ENCODE measurements at regions of chr12 and their contacts with region 1.

Region 1: DNA sequence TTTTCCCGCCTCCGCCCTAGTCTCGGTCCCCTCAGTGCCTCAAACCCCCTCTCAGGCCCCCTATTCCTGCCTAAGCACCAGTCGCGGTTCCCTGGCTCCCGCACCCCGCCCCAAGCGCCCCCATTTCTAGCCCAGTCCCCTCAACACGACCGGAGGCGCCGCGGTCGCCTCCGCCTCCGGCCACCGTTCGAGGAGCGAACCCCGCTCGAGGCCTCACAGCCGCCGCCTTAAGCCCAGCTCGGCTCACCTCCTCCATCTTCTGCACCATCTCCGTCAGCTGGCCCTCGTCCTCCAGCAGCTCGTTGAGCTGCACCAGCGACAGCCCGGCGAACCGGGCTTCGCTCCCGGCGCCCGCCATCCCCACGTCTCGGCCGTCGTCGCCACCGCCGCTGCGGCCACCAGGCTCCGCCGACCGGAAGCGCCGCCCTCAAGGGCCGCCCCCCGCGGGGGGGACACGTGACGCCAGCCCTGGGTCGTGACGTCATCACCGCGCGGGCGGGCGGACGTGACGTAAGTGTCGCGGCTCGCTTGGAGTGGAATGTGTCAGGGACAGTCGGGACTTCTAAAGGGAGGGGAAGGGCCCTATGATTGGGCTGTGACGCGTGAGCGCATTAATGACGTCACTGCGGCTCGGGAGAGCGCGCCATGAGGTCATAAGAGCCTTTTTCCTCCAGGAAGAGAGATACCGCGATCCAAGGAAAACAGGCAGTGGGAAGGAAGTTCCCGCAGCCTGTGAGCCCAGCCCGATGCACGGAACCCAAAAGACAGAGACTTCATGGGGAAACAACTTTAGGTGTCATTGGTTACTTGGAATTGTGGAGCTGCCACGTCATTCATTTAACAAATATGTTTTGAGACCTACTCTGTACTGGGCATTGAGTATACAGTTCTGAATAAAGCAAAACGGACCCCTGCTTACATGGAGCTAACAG is at the start of gene VPS37B:
- DNase-seq: peak; percentile 65 to 94
- H3K4me3 ChIP-seq: peak within 1 kb of the TSS; percentile 89 to 98
- H3K27ac ChIP-seq: peak within 1 kb of the TSS; percentile 84 to 94
- H3K4me1 ChIP-seq: peaks cover 0 to 28% of the 10 kb centered on the region in 2 donors
- H3K27me3 ChIP-seq: no peaks in the 10 kb centered on the region
- CTCF ChIP-seq: peak in 1 of 3 experiments; percentile 44
- total RNA-seq, gene VPS37B: 31.8 TPM

Region 2: GRCh38 chr12:122851820-122852219 is 44.2 kb before region 1 on chr12:
- intact Hi-C with region 1: loop called (anchors 5 kb)
- DNase-seq: peak; percentile 39 to 91
- H3K4me3 ChIP-seq: peak overlapping the region in 1 of 2 donors; percentile 22
- H3K27ac ChIP-seq: peak overlapping the region; percentile 86 to 92
- H3K4me1 ChIP-seq: peaks cover 25 to 42% of the 10 kb centered on the region in 2 donors
- H3K27me3 ChIP-seq: no peaks in the 10 kb centered on the region
- CTCF ChIP-seq: no peak

Region 3: GRCh38 chr12:122946690-122947341 is 50.8 kb after region 1 on chr12:
- intact Hi-C with region 1: loop called (anchors 2 kb)
- DNase-seq: peak; percentile 94 to 96
- H3K4me3 ChIP-seq: no peak overlapping the region
- H3K27ac ChIP-seq: peak overlapping the region; percentile 75 to 82
- H3K4me1 ChIP-seq: peaks cover 0 to 13% of the 10 kb centered on the region in 2 donors
- H3K27me3 ChIP-seq: no peaks in the 10 kb centered on the region
- CTCF ChIP-seq: peak in 2 of 3 experiments; percentile 32 to 42

Region 4: GRCh38 chr12:122965851-122966722 is 70.1 kb after region 1 on chr12 and contains the start of gene ABCB9:
- intact Hi-C with region 1: loop called (anchors 5 kb)
- DNase-seq: peak; percentile 54 to 95
- H3K4me3 ChIP-seq: peak within 1 kb of the TSS; percentile 62 to 73
- H3K27ac ChIP-seq: peak within 1 kb of the TSS; percentile 14 to 52
- H3K4me1 ChIP-seq: peaks cover 4 to 26% of the 10 kb centered on the region in 2 donors
- H3K27me3 ChIP-seq: no peaks in the 10 kb centered on the region
- CTCF ChIP-seq: no peak
- total RNA-seq, gene ABCB9: 19.6 TPM

Measured in ascending aorta (tissue), 2 donors.